Left lung (tissue), 14 donors: ENCODE measurements at regions of chr11 and their contacts with region 1.

Region 1: GRCh38 chr11:126989942-126990715 is 10.4 kb downstream of the KIRREL3 start:
- DNase-seq: peak; percentile 47 to 87 (median 66)
- ATAC-seq: peak; percentile 97
- H3K4me3 ChIP-seq: no peak overlapping the region
- H3K27ac ChIP-seq: no peak overlapping the region
- H3K4me1 ChIP-seq: no peaks in the 10 kb centered on the region
- H3K27me3 ChIP-seq: peaks cover 0 to 18% of the 10 kb centered on the region in 2 donors
- CTCF ChIP-seq: peak; percentile 85 to 89

Region 2: GRCh38 chr11:126716456-126717083 is 273.6 kb before region 1 on chr11:
- intact Hi-C with region 1: loop called (anchors 5 to 10 kb)
- DNase-seq: peak in 2 of 4 donors; percentile 33 to 55
- ATAC-seq: peak; percentile 77
- H3K4me3 ChIP-seq: no peak overlapping the region
- H3K27ac ChIP-seq: no peak overlapping the region
- H3K4me1 ChIP-seq: no peaks in the 10 kb centered on the region
- H3K27me3 ChIP-seq: peaks cover 0 to 18% of the 10 kb centered on the region in 2 donors
- CTCF ChIP-seq: peak; percentile 34 to 55

Region 3: DNA sequence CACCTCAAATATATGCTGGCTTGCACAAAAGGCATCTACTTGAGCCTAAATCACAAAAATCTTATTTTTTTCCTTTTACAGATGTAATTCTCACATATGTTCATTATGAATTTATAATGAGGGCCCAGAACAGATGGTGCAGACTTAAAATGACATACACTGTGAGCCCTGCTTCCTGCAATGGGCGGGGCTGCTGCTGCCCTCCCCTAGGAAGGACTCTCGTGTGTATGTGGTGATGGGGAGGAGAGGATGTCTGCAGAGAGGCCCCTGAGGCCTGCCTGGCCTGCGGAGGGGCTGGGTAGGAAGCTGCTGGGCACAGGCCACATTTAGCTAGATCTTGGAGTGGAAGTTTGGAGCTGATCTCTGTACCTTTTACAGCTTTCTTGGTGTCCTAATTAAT is 243.9 kb after region 1 on chr11:
- intact Hi-C with region 1: no loop called
- DNase-seq: no peak
- ATAC-seq: no peak
- H3K4me3 ChIP-seq: no peak overlapping the region
- H3K27ac ChIP-seq: no peak overlapping the region
- H3K4me1 ChIP-seq: no peaks in the 10 kb centered on the region
- H3K27me3 ChIP-seq: no peaks in the 10 kb centered on the region
- CTCF ChIP-seq: no peak

Region 4: DNA sequence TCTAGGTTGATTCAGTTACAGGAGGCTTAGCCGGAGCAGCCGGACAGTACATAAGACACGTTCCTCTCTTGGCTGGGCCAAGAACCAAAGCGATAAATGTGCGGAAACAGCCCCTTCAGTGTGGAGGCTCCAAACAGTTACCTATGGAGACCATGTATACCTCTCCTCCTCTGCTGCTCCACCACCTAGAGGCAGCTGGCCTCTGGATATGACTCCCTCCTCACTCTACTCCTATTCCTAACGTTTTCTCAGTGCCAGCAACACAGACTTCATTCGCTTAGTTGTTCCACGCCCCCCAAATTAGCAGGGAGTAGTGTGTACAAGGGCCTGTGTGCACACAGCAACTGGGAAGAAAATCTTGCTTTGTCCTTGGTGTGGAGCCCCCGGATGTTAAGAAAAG is 372.6 kb after region 1 on chr11:
- intact Hi-C with region 1: no loop called
- DNase-seq: no peak
- ATAC-seq: no peak
- H3K4me3 ChIP-seq: no peak overlapping the region
- H3K27ac ChIP-seq: no peak overlapping the region
- H3K4me1 ChIP-seq: no peaks in the 10 kb centered on the region
- H3K27me3 ChIP-seq: no peaks in the 10 kb centered on the region
- CTCF ChIP-seq: no peak